IMR-90 (cell line): ENCODE measurements at regions of chr3 and their contacts with region 1.

Region 1: DNA sequence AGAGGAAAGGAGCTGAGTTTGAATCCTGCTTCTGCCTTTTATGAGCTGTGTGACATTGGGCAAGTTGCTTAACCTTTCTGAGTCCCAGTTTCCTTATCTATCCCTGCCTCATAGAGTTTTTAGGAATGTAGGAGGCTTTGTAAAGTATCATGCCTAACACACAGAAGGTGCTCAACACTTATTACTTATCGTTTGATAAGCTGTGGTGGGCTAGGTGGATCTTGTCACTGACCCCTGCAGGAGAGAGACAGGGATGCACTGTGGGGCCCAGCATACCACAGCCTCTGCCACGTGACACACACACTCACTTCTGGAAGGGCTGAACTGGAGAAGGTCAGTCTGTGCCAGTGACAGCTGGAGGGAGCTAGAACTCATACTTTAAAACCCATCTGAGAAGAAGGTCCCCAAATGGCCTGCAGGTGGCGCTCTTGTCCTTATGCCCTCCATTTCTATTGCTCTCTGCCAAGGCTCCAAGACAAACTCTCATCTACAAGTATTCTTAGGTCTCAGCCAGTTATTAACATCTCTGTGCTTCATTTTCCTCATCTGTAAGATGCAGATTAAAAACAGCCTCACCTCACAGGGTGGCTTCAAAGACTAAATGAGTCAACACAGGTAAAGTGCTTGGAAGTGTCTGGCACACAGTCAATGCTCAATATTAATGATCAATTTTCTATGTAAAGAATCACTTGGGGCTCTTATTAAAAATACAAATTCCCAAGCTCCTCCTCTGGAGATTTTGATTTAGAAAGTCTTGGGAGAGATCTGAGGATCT is 57.5 kb upstream of the HACD2 start:
- DNase-seq: peak; percentile 95
- ATAC-seq: peak; percentile 91
- H3K4me3 ChIP-seq: no peak overlapping the region
- H3K27ac ChIP-seq: no peak overlapping the region
- H3K4me1 ChIP-seq: peaks cover 3% of the 10 kb centered on the region
- H3K27me3 ChIP-seq: no peaks in the 10 kb centered on the region
- CTCF ChIP-seq: peak; percentile 96
- POLR2A ChIP-seq: no peak
- RAD21 ChIP-seq: peak; percentile 79

Region 2: DNA sequence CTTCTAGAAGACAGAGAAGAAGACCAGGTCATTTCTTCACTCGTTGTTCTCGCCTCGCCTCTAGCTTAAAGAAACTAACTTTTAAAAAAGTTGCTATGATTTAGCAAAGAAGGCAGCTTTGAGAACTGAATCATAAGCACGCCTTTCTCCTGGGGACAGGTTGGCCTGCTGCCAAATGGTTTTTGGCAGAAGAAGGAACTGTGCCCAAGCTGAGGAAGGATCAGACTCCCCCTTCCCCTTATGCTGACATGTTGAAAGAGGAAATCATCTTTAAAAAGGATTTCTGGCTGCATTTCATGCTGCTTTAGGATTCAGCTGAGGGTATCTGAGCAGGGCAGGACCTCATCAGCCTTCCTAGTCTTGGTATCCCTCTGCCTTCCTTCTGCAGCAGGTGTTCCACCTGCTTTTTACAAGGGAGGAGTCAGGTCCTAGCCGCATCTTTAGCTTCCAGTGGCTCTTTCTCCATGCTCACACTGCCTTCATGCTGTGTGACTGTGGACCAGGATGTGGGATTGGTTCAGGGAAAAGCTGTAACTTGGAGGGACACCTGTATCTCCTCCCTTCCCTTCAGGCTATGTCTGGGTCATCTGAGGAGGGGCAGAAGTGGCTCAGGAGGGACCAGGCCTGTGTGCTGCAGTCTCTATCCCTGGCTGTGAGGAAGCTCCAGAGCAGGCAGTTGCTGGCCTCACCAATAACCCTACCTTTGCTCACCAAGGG is 23.4 kb before region 1 on chr3:
- CTCF ChIA-PET with region 1: interaction called, 13 read pairs
- POLR2A ChIA-PET with region 1: no interaction called
- dilution Hi-C with region 1: no loop called
- in situ Hi-C with region 1: no loop called
- intact Hi-C with region 1: no loop called
- DNase-seq: peak; percentile 82
- ATAC-seq: peak; percentile 1
- H3K4me3 ChIP-seq: peak overlapping the region; percentile 61
- H3K27ac ChIP-seq: peak overlapping the region; percentile 69
- H3K4me1 ChIP-seq: peaks cover 40% of the 10 kb centered on the region
- H3K27me3 ChIP-seq: no peaks in the 10 kb centered on the region
- CTCF ChIP-seq: no peak
- POLR2A ChIP-seq: no peak
- RAD21 ChIP-seq: no peak

Region 3: GRCh38 chr3:123702720-123703119 is 60.4 kb after region 1 on chr3:
- CTCF ChIA-PET with region 1: no interaction called
- POLR2A ChIA-PET with region 1: no interaction called
- dilution Hi-C with region 1: no loop called
- in situ Hi-C with region 1: no loop called
- intact Hi-C with region 1: loop called (anchors 1 kb)
- DNase-seq: no peak
- ATAC-seq: no peak
- H3K4me3 ChIP-seq: no peak overlapping the region
- H3K27ac ChIP-seq: no peak overlapping the region
- H3K4me1 ChIP-seq: peaks cover 35% of the 10 kb centered on the region
- H3K27me3 ChIP-seq: no peaks in the 10 kb centered on the region
- CTCF ChIP-seq: no peak
- POLR2A ChIP-seq: no peak
- RAD21 ChIP-seq: no peak

Region 4: DNA sequence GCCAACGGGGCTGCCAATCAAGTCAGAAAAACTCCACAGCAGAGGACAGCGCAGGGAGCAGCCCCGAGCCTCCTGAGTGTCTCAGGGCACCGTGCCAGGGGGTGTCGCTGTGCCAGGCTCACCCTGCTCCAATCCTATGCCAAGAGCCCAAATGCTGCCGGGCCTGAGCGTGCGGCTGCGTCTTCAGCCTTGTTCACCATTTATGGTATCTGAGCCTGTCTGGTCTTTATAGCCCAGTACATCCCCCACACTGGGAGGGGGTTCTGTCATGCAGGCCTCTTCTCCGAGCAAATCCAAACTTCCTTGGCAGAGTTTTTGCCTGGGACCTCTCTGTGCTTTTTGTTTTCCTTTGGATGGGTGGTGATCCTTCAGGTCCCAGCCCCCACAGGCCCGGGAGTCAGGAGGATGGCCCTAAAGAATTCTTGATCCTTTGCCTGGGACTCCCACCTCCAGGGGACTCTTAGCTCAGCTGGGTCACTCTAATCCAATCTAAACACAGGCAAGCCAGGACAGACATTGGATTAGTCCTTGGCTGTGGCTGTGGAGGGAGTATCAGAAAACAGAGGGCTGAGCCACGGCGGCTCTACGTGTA is 77.6 kb after region 1 on chr3:
- CTCF ChIA-PET with region 1: interaction called, 5 read pairs
- POLR2A ChIA-PET with region 1: no interaction called
- dilution Hi-C with region 1: no loop called
- in situ Hi-C with region 1: loop called (anchors 5 kb)
- intact Hi-C with region 1: no loop called
- DNase-seq: no peak
- ATAC-seq: peak; percentile 2; the same call in 1 of the 2 replicates
- H3K4me3 ChIP-seq: no peak overlapping the region
- H3K27ac ChIP-seq: peak overlapping the region; percentile 67; the same call in 1 of the 2 replicates
- H3K4me1 ChIP-seq: peaks cover 20% of the 10 kb centered on the region
- H3K27me3 ChIP-seq: no peaks in the 10 kb centered on the region
- CTCF ChIP-seq: no peak
- POLR2A ChIP-seq: no peak
- RAD21 ChIP-seq: no peak